CD8-positive, alpha-beta T cell (primary cell): ENCODE measurements at regions of chr1 and their contacts with region 1.

Region 1: GRCh38 chr1:84884656-84885389 is 8.2 kb downstream of the LPAR3 start:
- DNase-seq: no peak
- ATAC-seq: no peak
- H3K4me3 ChIP-seq: no peak overlapping the region
- H3K4me3 Mint-ChIP-seq: no peak overlapping the region
- H3K27ac ChIP-seq: no peak overlapping the region
- H3K27ac Mint-ChIP-seq: no peak overlapping the region
- H3K4me1 ChIP-seq: no peaks in the 10 kb centered on the region
- H3K4me1 Mint-ChIP-seq: peaks cover 5% of the 10 kb centered on the region
- H3K27me3 ChIP-seq: no peaks in the 10 kb centered on the region
- H3K27me3 Mint-ChIP-seq: no peaks in the 10 kb centered on the region
- CTCF ChIP-seq: no peak

Region 2: GRCh38 chr1:84721152-84721551 is 163.7 kb before region 1 on chr1:
- CTCF ChIA-PET with region 1: no interaction called
- POLR2A ChIA-PET with region 1: no interaction called
- intact Hi-C with region 1: no loop called
- DNase-seq: no peak
- ATAC-seq: no peak
- H3K4me3 ChIP-seq: no peak overlapping the region
- H3K4me3 Mint-ChIP-seq: no peak overlapping the region
- H3K27ac ChIP-seq: no peak overlapping the region
- H3K27ac Mint-ChIP-seq: no peak overlapping the region
- H3K4me1 ChIP-seq: no peaks in the 10 kb centered on the region
- H3K4me1 Mint-ChIP-seq: no peaks in the 10 kb centered on the region
- H3K27me3 ChIP-seq: no peaks in the 10 kb centered on the region
- H3K27me3 Mint-ChIP-seq: peaks cover 2% of the 10 kb centered on the region
- CTCF ChIP-seq: no peak

Region 3: GRCh38 chr1:84842748-84843231 is 42.0 kb before region 1 on chr1:
- CTCF ChIA-PET with region 1: no interaction called
- POLR2A ChIA-PET with region 1: no interaction called
- intact Hi-C with region 1: loop called in 1 of 2 experiments (anchors 5 kb)
- DNase-seq: no peak
- ATAC-seq: no peak
- H3K4me3 ChIP-seq: no peak overlapping the region
- H3K4me3 Mint-ChIP-seq: no peak overlapping the region
- H3K27ac ChIP-seq: no peak overlapping the region
- H3K27ac Mint-ChIP-seq: no peak overlapping the region
- H3K4me1 ChIP-seq: peaks cover 8% of the 10 kb centered on the region
- H3K4me1 Mint-ChIP-seq: peaks cover 10% of the 10 kb centered on the region
- H3K27me3 ChIP-seq: no peaks in the 10 kb centered on the region
- H3K27me3 Mint-ChIP-seq: no peaks in the 10 kb centered on the region
- CTCF ChIP-seq: no peak

Region 4: DNA sequence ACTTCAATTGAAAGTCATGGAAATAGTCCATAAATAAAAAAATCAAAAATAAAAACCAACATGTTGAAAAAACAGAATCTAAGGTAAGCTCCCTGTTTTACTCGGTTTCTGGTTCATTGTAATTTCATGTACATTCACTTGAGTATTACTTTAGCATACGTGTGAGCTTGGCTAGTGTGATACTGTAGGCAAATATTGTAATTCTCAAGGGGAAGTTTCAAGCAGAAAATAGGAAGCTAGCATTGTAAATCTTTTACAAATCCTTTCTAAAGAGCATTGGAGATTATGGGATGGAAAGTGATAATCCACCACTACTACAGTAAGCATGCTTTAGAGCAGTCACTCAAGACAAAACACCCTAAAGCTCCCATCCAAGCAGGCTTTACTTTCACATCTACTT is 11.5 kb after region 1 on chr1:
- CTCF ChIA-PET with region 1: no interaction called
- POLR2A ChIA-PET with region 1: no interaction called
- intact Hi-C with region 1: no loop called
- DNase-seq: no peak
- ATAC-seq: no peak
- H3K4me3 ChIP-seq: no peak overlapping the region
- H3K4me3 Mint-ChIP-seq: no peak overlapping the region
- H3K27ac ChIP-seq: no peak overlapping the region
- H3K27ac Mint-ChIP-seq: no peak overlapping the region
- H3K4me1 ChIP-seq: peaks cover 12% of the 10 kb centered on the region
- H3K4me1 Mint-ChIP-seq: peaks cover 10% of the 10 kb centered on the region
- H3K27me3 ChIP-seq: peaks cover 5 to 8% of the 10 kb centered on the region in 2 experiments
- H3K27me3 Mint-ChIP-seq: peaks cover 35% of the 10 kb centered on the region
- CTCF ChIP-seq: no peak